A673 (cell line): ENCODE measurements at regions of chr19 and their contacts with region 1.

Region 1: GRCh38 chr19:12703046-12703445 is 6.6 kb upstream of the FBXW9 start:
- DNase-seq: peak; percentile 89
- H3K4me3 ChIP-seq: no peak overlapping the region
- H3K27ac ChIP-seq: no peak overlapping the region
- H3K4me1 ChIP-seq: no peaks in the 10 kb centered on the region
- H3K27me3 ChIP-seq: no peaks in the 10 kb centered on the region
- CTCF ChIP-seq: no peak

Region 2: DNA sequence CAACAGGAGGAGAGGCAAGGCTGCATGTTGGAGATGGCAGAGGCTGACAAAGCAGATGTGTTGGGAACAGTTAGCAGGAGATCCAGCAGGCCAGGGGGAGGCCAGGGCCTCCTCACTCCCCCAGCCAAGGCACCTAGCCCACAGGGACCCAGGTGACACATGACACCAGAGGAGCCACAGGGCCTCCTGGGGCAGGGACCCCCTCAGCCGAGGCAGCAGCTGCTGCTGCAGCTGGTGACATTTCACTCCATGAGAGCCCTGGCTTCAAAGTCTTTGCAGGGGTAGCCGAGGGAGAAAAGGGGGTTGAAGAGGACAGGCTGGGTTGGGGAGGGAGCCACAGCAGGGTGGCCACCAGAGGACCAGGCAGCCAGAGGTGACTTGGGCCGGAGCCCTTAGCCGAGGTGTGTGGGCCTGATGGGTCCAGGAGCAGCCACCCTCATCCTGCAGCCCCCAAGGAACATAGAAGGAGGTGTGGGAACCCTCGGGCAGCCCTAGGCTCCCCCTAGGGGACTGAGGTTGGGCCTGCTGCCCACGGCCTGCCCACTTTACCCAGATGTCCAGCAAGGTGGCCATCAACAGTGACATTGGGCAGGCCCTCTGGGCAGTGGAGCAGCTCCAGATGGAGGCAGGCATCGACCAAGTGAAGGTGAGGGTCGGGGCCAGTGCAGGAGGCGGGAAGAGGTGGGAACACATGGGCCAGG is 15.4 kb before region 1 on chr19 and contains the start of gene GNG14:
- CTCF ChIA-PET with region 1: no interaction called
- POLR2A ChIA-PET with region 1: interaction called, 13 read pairs
- intact Hi-C with region 1: no loop called
- DNase-seq: no peak
- H3K4me3 ChIP-seq: no peak within 1 kb of the TSS
- H3K27ac ChIP-seq: no peak within 1 kb of the TSS
- H3K4me1 ChIP-seq: no peaks in the 10 kb centered on the region
- H3K27me3 ChIP-seq: no peaks in the 10 kb centered on the region
- CTCF ChIP-seq: no peak
- total RNA-seq, gene GNG14: not detected in 2 replicates

Region 3: GRCh38 chr19:12943437-12944044 is 240.5 kb after region 1 on chr19:
- CTCF ChIA-PET with region 1: no interaction called
- POLR2A ChIA-PET with region 1: interaction called, 14 read pairs
- intact Hi-C with region 1: no loop called
- DNase-seq: no peak
- H3K4me3 ChIP-seq: no peak overlapping the region
- H3K27ac ChIP-seq: peak overlapping the region; percentile 46
- H3K4me1 ChIP-seq: peaks cover 33% of the 10 kb centered on the region
- H3K27me3 ChIP-seq: no peaks in the 10 kb centered on the region
- CTCF ChIP-seq: no peak